Activated T-helper 1 cell treated with anti-CD3 and anti-CD28 coated beads, Interleukin-12 subunit alpha, Interleukin-12 subunit beta, Interleukin-2, Interleukin-4 antibody, amounts not matched to agents 30 ng/mL and 10 ng/mL and 1 ng/mL, durations not matched to agents 14 hours and 24 hours and 36 hours (primary cell): ENCODE measurements at regions of chr22 and their contacts with region 1.

Region 1: DNA sequence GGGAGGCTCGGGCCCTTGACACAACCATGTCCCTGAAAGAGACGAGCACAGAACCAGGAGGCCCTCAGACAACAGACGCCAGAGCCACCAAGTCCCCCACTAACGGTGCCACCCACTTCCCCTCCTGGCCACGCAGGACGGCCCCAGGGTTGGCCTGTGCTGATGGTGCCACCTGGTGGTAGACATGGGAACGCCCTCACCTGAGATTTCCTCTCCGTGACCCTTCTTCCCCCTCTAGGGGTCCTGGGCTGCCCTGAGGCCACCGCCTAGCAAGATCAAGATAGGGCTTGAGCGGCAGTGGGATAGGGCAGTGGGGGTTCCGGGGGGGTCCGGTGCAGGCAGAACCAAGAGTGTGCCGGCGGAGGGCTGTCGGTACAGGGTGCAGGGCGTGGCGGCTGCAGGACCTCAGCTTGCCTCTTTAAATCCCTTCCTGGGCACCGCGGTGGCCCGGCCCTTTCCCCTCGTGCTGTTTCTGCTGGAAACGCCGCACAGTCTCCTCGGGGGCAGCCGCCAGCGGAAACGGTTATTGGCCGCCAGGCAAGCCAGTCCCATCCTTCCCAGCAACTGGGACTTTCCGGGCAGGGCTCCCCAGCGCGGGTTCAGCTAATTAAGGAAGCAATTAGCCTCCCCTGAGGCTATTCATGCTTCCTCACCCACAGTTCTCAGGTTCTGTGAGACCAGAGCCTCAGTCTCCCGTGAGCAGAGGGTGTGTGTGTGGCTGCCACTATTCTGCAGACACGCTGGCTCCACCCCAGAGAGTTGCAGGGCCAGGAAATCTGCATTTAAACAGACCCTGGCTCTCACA is 5.5 kb upstream of the NFAM1 start:
- DNase-seq: peak; percentile 76
- H3K4me3 Mint-ChIP-seq: peak overlapping the region; percentile 83
- H3K27ac Mint-ChIP-seq: peak overlapping the region; percentile 73
- H3K4me1 Mint-ChIP-seq: peaks cover 21% of the 10 kb centered on the region
- H3K27me3 Mint-ChIP-seq: peaks cover 8% of the 10 kb centered on the region

Region 2: GRCh38 chr22:42169055-42169469 is 268.6 kb before region 1 on chr22:
- intact Hi-C with region 1: loop called (anchors 1 kb)
- DNase-seq: peak; percentile 47
- H3K4me3 Mint-ChIP-seq: no peak overlapping the region
- H3K27ac Mint-ChIP-seq: peak overlapping the region; percentile 34
- H3K4me1 Mint-ChIP-seq: peaks cover 23% of the 10 kb centered on the region
- H3K27me3 Mint-ChIP-seq: no peaks in the 10 kb centered on the region

Region 3: DNA sequence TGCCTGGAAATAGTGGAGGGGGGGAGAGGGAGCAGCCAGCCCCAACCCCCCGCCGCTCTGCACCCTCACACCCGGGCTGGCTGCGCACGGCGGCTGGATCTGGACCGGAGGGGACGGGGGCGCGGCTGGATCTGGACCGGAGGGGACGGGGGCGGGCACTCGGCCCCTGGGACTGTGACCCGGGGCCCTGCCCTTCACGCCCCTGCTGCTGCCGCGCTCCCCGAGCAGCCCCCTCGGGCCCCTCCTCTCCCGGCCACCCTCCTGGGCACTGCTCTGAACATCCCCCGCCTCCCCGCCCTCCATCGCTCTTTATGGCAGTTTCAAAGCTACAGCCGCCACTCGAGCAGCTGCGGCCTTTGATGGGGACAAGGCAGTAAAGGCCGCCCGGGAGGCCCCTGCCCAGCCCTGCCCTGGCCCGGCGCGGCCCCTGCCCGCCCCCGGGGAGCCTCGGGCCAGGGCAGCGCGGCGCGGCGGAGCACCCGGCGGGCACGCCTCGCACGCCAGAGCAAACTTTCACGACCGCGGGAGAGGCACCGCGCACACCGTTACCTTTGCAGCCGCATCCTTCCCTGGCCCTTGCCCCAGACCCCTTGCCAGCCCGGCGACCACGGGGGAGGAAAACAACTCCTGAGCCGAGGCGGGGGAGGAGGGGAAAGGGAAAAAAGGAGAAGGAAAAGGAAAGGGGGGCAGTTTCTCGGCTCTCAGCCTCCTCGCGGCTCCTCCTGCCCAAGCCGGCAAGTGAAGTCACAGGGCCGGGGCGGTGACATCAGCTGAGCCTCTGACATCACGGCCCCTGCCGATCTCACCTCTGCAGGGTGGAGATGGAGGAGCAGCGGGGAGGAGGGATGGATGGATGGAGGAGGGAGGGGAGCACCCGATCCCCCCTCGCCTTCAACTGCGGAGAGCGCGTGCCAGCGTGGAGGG is 154.2 kb before region 1 on chr22:
- intact Hi-C with region 1: loop called (anchors 10 kb)
- DNase-seq: peak; percentile 21
- H3K4me3 Mint-ChIP-seq: peak overlapping the region; percentile 59
- H3K27ac Mint-ChIP-seq: no peak overlapping the region
- H3K4me1 Mint-ChIP-seq: peaks cover 30% of the 10 kb centered on the region
- H3K27me3 Mint-ChIP-seq: peaks cover 15% of the 10 kb centered on the region

Region 4: DNA sequence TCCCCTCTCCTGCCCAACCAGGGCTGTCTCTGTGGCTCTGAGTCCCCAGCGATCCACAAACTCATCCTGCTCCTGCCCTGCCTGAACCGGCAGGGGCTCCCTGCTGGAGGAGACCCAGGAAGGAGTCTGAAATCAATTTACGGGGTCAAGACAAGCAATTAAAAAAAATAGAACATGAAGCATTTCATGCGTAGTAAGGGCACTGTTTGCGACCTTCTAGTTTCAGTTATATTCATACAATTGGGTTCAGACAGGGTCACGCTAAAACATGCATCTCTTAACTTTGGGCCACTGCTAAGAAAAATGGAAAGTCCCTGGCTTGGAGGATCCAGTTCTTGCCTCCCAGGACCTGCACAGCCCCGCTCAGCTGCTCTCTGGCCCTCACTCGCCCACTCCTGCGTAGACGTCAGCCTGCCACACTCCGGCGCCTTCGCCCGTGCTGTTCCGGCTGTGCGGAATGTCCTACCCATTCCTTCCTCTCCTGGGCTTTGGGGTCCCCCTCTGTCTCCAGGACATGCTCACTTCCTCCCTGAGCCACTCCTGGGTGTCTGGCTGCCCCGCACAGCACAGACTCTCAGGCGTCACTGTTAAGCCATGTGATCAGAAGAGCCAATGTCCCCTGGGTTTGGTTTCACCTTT is 18.3 kb before region 1 on chr22:
- intact Hi-C with region 1: no loop called
- DNase-seq: no peak
- H3K4me3 Mint-ChIP-seq: no peak overlapping the region
- H3K27ac Mint-ChIP-seq: no peak overlapping the region
- H3K4me1 Mint-ChIP-seq: peaks cover 5% of the 10 kb centered on the region
- H3K27me3 Mint-ChIP-seq: peaks cover 3% of the 10 kb centered on the region